ENCODE measurements at regions of chr1 and their contacts with region 1.

Region 1: GRCh38 chr1:26102526-26102925 is 9.1 kb upstream of the PDIK1L start:
- DNase-seq: no peak
- H3K4me3 ChIP-seq: no peak overlapping the region
- H3K27ac ChIP-seq: no peak overlapping the region
- H3K4me1 ChIP-seq: no peaks in the 10 kb centered on the region
- H3K27me3 ChIP-seq: no peaks in the 10 kb centered on the region
- CTCF ChIP-seq: no peak

Region 2: DNA sequence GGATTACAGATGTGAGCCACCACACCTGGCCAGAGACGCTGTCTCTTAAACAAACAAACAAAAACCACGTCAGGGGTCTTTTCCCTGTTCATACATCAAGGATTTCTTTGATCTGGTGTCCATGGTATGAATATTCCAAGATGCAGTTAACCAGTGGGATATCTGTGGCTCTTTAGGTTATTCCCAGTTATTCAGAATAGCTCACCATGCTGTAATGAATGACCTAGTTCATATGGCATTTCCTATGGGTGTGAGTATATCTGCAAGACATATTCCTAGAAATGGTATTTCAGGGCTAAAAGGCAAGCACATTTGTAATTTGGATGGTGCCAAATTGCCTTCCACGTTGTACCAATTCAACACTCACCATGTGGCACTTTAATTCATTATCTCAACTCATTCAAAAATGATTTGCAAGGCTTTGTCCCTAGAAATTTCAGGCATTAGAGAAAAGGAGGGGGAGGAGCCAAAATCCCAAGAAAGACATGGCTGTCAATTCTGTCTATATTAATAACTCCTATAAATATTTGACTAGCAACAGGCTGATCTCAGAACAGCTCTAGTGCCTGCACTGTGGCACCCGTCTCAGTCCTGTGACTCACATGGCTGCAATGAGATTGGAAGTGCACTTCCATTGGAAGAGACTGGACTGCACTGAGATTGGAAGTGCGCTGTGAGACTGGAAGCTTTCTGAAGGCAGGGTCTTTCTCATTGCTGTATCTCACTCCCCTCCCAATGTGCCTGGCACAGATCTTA is 190.3 kb before region 1 on chr1:
- intact Hi-C with region 1: no loop called
- DNase-seq: no peak
- H3K4me3 ChIP-seq: no peak overlapping the region
- H3K27ac ChIP-seq: no peak overlapping the region
- H3K4me1 ChIP-seq: no peaks in the 10 kb centered on the region
- H3K27me3 ChIP-seq: no peaks in the 10 kb centered on the region
- CTCF ChIP-seq: no peak

Region 3: DNA sequence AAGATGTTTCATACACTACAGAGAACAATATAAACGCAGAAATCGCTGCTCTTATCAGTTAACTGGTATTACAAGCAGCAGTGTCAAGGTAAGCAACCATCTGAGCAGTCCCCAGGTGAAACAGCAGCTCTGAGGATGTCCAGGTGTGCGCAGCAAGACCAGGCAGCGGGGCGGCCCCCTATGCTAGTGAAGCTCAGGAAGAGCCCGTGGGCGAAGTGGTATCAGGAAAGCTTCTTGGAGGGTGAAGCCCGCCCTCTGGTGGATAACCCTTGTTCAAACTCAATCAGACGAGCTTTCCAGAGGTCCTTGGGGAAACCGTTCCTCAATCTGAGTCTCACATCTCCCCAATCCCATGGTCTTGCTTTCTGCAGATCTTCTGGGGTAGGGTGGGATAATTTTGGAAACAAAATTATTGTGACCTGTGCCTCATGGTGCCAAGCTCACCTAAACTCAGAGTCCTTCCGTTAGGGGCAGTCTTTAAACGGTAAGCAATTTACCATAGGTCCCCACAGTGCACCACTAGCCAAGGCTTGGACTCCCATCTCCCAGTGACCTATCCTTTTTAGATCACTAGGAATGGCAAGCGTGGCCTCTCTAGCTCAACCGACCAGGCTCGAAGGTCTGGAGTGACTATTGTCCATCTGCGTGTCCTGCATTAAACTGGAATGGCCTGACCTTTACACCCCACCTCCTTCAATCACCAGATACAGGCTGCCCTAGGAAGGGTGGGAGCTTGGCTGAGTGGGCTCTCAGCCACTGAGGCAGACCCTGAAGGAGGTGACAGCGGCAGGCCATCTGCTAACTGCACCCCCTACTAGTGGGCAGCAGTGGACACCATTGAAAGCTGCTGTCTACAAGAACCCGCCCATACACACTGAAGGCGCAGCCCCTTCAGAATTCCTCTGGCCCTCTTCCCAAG is 42.8 kb after region 1 on chr1:
- intact Hi-C with region 1: loop called (anchors 2 kb)
- DNase-seq: peak; percentile 88
- H3K4me3 ChIP-seq: no peak overlapping the region
- H3K27ac ChIP-seq: no peak overlapping the region
- H3K4me1 ChIP-seq: no peaks in the 10 kb centered on the region
- H3K27me3 ChIP-seq: no peaks in the 10 kb centered on the region
- CTCF ChIP-seq: peak; percentile 64

Region 4: GRCh38 chr1:26254404-26254803 is 151.9 kb after region 1 on chr1:
- intact Hi-C with region 1: no loop called
- DNase-seq: no peak
- H3K4me3 ChIP-seq: no peak overlapping the region
- H3K27ac ChIP-seq: no peak overlapping the region
- H3K4me1 ChIP-seq: no peaks in the 10 kb centered on the region
- H3K27me3 ChIP-seq: no peaks in the 10 kb centered on the region
- CTCF ChIP-seq: no peak